Vagina (tissue), 2 donors: ENCODE measurements at regions of chr14 and their contacts with region 1.

Region 1: GRCh38 chr14:52131640-52132320 is 62.9 kb upstream of the NID2 start:
- DNase-seq: no peak
- H3K4me3 ChIP-seq: no peak overlapping the region
- H3K27ac ChIP-seq: no peak overlapping the region
- H3K4me1 ChIP-seq: peaks cover 4% of the 10 kb centered on the region
- H3K27me3 ChIP-seq: no peaks in the 10 kb centered on the region
- CTCF ChIP-seq: peak; percentile 6 to 78 (median 63)
- POLR2A ChIP-seq: no peak

Region 2: DNA sequence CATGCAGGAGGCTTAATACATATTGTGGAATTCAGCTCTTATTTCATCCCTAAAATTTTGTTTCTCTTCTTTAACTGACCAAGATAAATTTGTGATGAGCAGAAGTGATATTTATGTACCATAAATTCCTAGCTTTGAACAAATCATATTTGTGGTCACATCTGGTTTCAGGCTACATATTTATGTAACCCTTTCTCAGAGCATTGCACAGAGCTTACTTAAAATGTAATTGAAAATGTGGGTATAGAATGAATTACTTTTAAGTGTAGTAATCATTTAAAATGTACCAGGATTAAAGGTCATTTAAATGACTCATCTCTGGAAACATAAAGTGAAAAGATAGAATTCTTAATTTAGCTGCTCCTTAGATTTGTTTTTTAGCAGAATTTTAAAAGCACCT is 610.0 kb before region 1 on chr14:
- intact Hi-C with region 1: no loop called
- DNase-seq: no peak
- H3K4me3 ChIP-seq: no peak overlapping the region
- H3K27ac ChIP-seq: no peak overlapping the region
- H3K4me1 ChIP-seq: no peaks in the 10 kb centered on the region
- H3K27me3 ChIP-seq: no peaks in the 10 kb centered on the region
- CTCF ChIP-seq: no peak
- POLR2A ChIP-seq: no peak

Region 3: DNA sequence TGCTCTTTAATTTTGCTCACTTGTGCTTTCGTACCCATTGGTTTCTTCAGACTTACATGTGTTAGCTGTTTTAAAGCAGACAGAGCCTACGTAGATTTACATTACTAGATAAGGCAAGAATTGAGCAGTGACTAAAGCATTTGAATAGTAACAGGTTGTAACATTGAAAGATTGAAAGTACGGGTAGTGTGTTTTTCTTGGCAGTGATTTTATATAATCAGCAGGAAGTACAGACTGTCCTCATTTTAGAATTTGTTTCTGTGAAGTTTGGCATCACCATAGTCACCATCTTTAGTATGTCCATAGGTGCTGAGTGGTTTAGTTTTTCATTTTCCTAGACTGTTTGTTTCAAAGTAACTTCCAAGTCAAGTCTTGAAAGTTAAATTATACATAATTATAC is 128.5 kb before region 1 on chr14:
- intact Hi-C with region 1: loop called (anchors 5 kb)
- DNase-seq: no peak
- H3K4me3 ChIP-seq: no peak overlapping the region
- H3K27ac ChIP-seq: no peak overlapping the region
- H3K4me1 ChIP-seq: no peaks in the 10 kb centered on the region
- H3K27me3 ChIP-seq: no peaks in the 10 kb centered on the region
- CTCF ChIP-seq: no peak
- POLR2A ChIP-seq: no peak

Region 4: GRCh38 chr14:53591816-53592215 is 1460.0 kb after region 1 on chr14:
- intact Hi-C with region 1: no loop called
- DNase-seq: no peak
- H3K4me3 ChIP-seq: no peak overlapping the region
- H3K27ac ChIP-seq: no peak overlapping the region
- H3K4me1 ChIP-seq: no peaks in the 10 kb centered on the region
- H3K27me3 ChIP-seq: no peaks in the 10 kb centered on the region
- CTCF ChIP-seq: no peak
- POLR2A ChIP-seq: no peak